CD14-positive monocyte (primary cell): ENCODE measurements at regions of chr11 and their contacts with region 1.

Region 1: DNA sequence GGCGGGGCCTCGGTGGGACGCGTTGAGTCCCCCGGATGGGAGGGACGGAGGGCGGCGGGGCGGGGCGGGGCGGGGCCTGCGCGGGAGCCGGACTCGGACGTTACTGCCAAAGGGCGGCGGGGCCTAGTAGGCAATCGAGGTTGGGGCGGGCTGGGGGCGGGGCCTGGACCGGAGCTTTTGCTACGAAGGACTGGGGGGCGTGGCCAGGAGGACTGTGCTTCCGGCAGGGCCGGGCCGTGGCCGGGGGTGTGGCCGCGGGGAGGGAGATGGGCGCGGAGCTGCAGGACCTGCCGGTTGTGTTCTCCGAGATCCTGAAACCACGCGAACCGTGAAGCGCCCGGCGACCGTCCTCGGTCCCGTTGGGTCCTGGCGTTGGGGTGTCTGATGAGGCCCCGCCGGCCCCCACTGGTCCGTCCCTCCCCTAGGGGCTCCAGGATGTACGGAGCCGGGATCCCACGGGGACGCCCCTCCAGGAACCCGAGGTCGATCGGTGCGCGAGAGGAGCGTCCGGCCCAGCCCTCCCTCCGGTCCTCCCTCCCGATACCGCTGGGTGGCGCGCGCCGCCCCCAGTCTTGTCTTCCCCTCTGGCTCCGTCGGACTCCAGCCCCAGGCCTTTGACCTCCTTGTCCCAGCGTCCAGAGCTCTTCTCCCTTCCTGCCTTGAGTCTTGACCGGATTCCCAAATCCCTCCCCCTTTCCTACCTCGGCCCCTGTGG is 648 bp upstream of the NUDT8 start:
- DNase-seq: peak; percentile 96
- H3K4me3 ChIP-seq: peak overlapping the region; percentile 48 to 86 (median 56)
- H3K4me3 Mint-ChIP-seq: peak overlapping the region; percentile 84 to 90
- H3K27ac ChIP-seq: peak overlapping the region; percentile 28 to 70
- H3K27ac Mint-ChIP-seq: peak overlapping the region; percentile 56 to 92 (median 81)
- H3K4me1 ChIP-seq: peaks cover 16 to 21% of the 10 kb centered on the region in 2 donors
- H3K4me1 Mint-ChIP-seq: peaks cover 10% of the 10 kb centered on the region
- H3K27me3 ChIP-seq: no peaks in the 10 kb centered on the region
- H3K27me3 Mint-ChIP-seq: peaks cover 0 to 4% (median 1%) of the 10 kb centered on the region in 3 donors
- CTCF ChIP-seq: peak; percentile 88

Region 2: DNA sequence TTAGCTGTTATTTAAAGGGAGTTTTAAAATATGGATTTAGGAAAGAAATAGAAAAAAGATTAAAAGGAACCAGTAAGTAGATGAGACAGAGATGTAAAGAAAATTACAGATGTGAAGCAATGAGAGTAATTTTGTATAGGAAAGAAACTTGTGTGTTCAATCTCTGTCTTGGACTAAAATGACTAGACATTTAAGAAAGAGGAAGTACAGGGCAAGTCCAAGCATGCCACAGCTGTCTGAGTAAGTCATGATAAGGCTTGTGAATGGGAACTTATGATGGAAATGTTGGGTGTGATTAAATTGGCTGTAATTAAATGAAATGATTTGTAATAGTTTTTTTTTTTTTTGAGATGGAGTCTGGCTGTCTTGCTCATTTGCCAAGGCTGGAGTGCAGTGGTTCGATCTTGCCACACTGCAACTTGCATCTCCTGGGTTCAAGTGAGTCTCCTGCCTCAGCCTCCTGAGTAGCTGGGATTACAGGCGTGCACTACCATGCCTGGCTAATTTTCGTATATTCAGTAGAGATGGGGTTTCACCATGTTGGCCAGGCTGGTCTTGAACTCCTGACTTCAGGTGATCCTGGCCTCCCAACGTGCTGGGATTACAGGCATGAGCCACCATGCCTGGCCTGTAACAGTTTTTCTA is 26.0 kb after region 1 on chr11:
- intact Hi-C with region 1: loop called in 1 of 2 experiments (anchors 2 kb)
- DNase-seq: peak; percentile 34 to 54 (median 52)
- H3K4me3 ChIP-seq: no peak overlapping the region
- H3K4me3 Mint-ChIP-seq: no peak overlapping the region
- H3K27ac ChIP-seq: no peak overlapping the region
- H3K27ac Mint-ChIP-seq: no peak overlapping the region
- H3K4me1 ChIP-seq: no peaks in the 10 kb centered on the region
- H3K4me1 Mint-ChIP-seq: no peaks in the 10 kb centered on the region
- H3K27me3 ChIP-seq: no peaks in the 10 kb centered on the region
- H3K27me3 Mint-ChIP-seq: peaks cover 2 to 6% (median 2%) of the 10 kb centered on the region in 3 donors
- CTCF ChIP-seq: no peak

Region 3: DNA sequence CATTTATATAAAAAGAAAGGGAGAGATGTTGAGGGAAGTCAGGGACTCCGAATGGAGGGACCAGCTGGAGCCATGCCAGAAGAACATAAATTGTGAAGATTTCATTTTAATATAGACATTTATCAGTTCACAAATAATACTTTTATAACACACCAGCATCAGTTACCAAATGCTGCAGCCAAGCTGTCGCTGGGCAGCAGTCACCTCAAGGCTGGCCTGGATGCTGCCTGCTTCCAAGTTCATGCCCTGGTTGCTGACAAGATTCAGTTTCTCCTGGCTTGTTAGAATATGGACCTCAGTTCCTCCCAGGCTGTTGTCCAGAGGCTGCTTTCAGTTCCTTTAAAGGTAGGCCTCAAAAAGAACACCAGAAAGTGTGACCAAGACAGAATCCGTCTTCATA is 74.9 kb after region 1 on chr11:
- intact Hi-C with region 1: loop called (anchors 5 to 10 kb)
- DNase-seq: no peak
- H3K4me3 ChIP-seq: no peak overlapping the region
- H3K4me3 Mint-ChIP-seq: no peak overlapping the region
- H3K27ac ChIP-seq: no peak overlapping the region
- H3K27ac Mint-ChIP-seq: no peak overlapping the region
- H3K4me1 ChIP-seq: no peaks in the 10 kb centered on the region
- H3K4me1 Mint-ChIP-seq: no peaks in the 10 kb centered on the region
- H3K27me3 ChIP-seq: no peaks in the 10 kb centered on the region
- H3K27me3 Mint-ChIP-seq: peaks cover 2 to 16% (median 9%) of the 10 kb centered on the region in 3 donors
- CTCF ChIP-seq: no peak